CD4-positive, alpha-beta T cell (primary cell): ENCODE measurements at regions of chr6 and their contacts with region 1.

Region 1: GRCh38 chr6:57316581-57317059 is 810 bp upstream of the PRIM2 start:
- DNase-seq: peak; percentile 64 to 90 (median 76)
- ATAC-seq: peak; percentile 83
- H3K4me3 ChIP-seq: peak overlapping the region; percentile 75
- H3K4me3 Mint-ChIP-seq: peak overlapping the region; percentile 97
- H3K27ac ChIP-seq: peak overlapping the region; percentile 20 to 37
- H3K27ac Mint-ChIP-seq: peak overlapping the region; percentile 84
- H3K4me1 ChIP-seq: peaks cover 12% of the 10 kb centered on the region
- H3K4me1 Mint-ChIP-seq: peaks cover 35% of the 10 kb centered on the region
- H3K27me3 ChIP-seq: no peaks in the 10 kb centered on the region
- H3K27me3 Mint-ChIP-seq: no peaks in the 10 kb centered on the region
- CTCF ChIP-seq: peak; percentile 93

Region 2: GRCh38 chr6:56637640-56638039 is 679.0 kb before region 1 on chr6:
- CTCF ChIA-PET with region 1: no interaction called
- POLR2A ChIA-PET with region 1: interaction called, 3 read pairs
- intact Hi-C with region 1: loop called (anchors 2 to 5 kb)
- DNase-seq: peak in 3 of 14 experiments; percentile 5 to 28 (median 20)
- ATAC-seq: no peak
- H3K4me3 ChIP-seq: no peak overlapping the region
- H3K4me3 Mint-ChIP-seq: no peak overlapping the region
- H3K27ac ChIP-seq: no peak overlapping the region
- H3K27ac Mint-ChIP-seq: no peak overlapping the region
- H3K4me1 ChIP-seq: no peaks in the 10 kb centered on the region
- H3K4me1 Mint-ChIP-seq: no peaks in the 10 kb centered on the region
- H3K27me3 ChIP-seq: no peaks in the 10 kb centered on the region
- H3K27me3 Mint-ChIP-seq: no peaks in the 10 kb centered on the region
- CTCF ChIP-seq: peak; percentile 38

Region 3: DNA sequence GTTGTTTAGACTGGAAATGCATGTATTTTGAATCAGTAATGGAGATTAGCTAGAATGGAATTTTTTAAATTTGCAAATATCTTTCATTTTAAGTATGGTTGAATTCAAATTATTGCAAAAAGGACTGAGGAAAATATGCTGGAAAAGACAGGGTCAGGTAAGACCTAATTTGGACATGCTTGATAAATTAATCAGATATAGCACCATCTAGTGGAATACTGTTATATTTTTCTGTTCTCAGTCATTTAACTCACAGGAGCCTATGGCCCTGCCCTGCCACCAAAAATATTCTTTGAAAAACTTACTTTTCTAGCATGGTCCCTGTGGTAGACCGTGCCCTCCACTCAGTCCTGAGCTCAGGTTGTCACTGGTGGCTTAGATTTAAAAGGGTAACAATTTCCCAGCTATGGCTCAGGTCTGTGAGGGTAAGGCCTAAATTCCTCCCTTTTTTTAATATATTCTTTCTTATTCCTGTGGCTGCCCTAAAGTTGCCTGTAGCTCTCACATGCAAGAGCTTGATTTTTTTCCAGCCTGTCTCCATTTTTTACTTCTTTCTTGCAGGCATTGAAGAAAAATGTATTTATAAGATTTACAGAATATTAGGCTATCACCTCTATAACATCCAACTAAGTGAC is 295.4 kb before region 1 on chr6:
- CTCF ChIA-PET with region 1: no interaction called
- POLR2A ChIA-PET with region 1: no interaction called
- intact Hi-C with region 1: loop called in 1 of 2 experiments (anchors 2 kb)
- DNase-seq: peak in 3 of 14 experiments; percentile 22 to 38 (median 26)
- ATAC-seq: peak; percentile 44
- H3K4me3 ChIP-seq: no peak overlapping the region
- H3K4me3 Mint-ChIP-seq: no peak overlapping the region
- H3K27ac ChIP-seq: no peak overlapping the region
- H3K27ac Mint-ChIP-seq: no peak overlapping the region
- H3K4me1 ChIP-seq: no peaks in the 10 kb centered on the region
- H3K4me1 Mint-ChIP-seq: no peaks in the 10 kb centered on the region
- H3K27me3 ChIP-seq: no peaks in the 10 kb centered on the region
- H3K27me3 Mint-ChIP-seq: peaks cover 5% of the 10 kb centered on the region
- CTCF ChIP-seq: peak; percentile 62

Region 4: DNA sequence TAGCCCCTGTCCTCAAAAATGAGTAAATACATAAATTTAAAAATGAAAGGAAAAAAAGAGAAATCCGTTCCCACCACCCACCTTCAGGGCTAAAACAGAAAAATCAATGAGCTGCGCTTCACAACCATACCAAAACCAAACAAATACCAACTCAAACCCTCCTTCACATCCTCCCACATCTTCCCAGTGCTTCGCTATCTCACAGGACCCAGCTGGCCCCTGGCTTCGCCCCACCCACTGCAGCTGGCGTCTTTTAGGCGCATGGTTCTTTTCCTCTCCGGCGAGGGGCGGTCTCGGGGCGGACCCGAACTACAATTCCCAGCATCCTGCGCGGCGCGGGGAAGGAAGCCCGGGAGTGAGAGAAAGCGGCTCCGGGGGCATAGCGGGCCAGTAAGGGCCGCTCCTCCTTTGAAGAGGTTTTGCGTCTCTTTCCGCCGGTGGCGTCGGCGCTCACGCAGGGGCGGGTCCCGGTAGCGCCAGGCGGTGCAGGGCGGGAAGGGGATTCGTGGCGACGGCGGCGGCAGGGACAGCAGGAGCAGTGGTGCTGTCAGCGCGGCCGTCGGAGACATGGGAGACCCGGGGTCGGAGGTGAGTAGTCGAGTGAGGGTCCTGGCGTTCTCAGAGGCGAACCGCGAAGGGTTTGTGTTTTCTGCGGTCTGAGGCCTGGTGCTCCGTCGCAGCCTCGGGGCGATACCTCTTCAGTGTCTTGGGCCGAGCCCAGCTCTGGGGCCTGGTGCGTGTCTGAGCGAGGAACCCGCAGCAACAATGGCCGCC is 226.7 kb before region 1 on chr6 and contains the start of gene ZNF451:
- CTCF ChIA-PET with region 1: no interaction called
- POLR2A ChIA-PET with region 1: no interaction called
- intact Hi-C with region 1: loop called in 1 of 2 experiments (anchors 5 kb)
- DNase-seq: peak; percentile 90 to 98 (median 96)
- ATAC-seq: peak; percentile 89
- H3K4me3 ChIP-seq: peak within 1 kb of the TSS; percentile 59
- H3K4me3 Mint-ChIP-seq: peak within 1 kb of the TSS; percentile 88
- H3K27ac ChIP-seq: peak within 1 kb of the TSS; percentile 41 to 60
- H3K27ac Mint-ChIP-seq: peak within 1 kb of the TSS; percentile 85
- H3K4me1 ChIP-seq: peaks cover 14% of the 10 kb centered on the region
- H3K4me1 Mint-ChIP-seq: peaks cover 36% of the 10 kb centered on the region
- H3K27me3 ChIP-seq: no peaks in the 10 kb centered on the region
- H3K27me3 Mint-ChIP-seq: no peaks in the 10 kb centered on the region
- CTCF ChIP-seq: no peak
- total RNA-seq, gene ZNF451: 124 to 132 TPM

Region 5: GRCh38 chr6:57190140-57190539 is 126.5 kb before region 1 on chr6:
- CTCF ChIA-PET with region 1: interaction called, 4 read pairs
- POLR2A ChIA-PET with region 1: interaction called, 11 read pairs
- intact Hi-C with region 1: loop called (anchors 1 to 5 kb)
- DNase-seq: no peak
- ATAC-seq: no peak
- H3K4me3 ChIP-seq: no peak overlapping the region
- H3K4me3 Mint-ChIP-seq: no peak overlapping the region
- H3K27ac ChIP-seq: no peak overlapping the region
- H3K27ac Mint-ChIP-seq: no peak overlapping the region
- H3K4me1 ChIP-seq: no peaks in the 10 kb centered on the region
- H3K4me1 Mint-ChIP-seq: peaks cover 5% of the 10 kb centered on the region
- H3K27me3 ChIP-seq: no peaks in the 10 kb centered on the region
- H3K27me3 Mint-ChIP-seq: no peaks in the 10 kb centered on the region
- CTCF ChIP-seq: peak; percentile 3

Region 6: GRCh38 chr6:57267586-57268293 is 48.9 kb before region 1 on chr6:
- CTCF ChIA-PET with region 1: interaction called, 7 read pairs
- POLR2A ChIA-PET with region 1: no interaction called
- intact Hi-C with region 1: loop called (anchors 1 to 2 kb)
- DNase-seq: peak in 13 of 14 experiments; percentile 4 to 61 (median 23)
- ATAC-seq: no peak
- H3K4me3 ChIP-seq: no peak overlapping the region
- H3K4me3 Mint-ChIP-seq: no peak overlapping the region
- H3K27ac ChIP-seq: no peak overlapping the region
- H3K27ac Mint-ChIP-seq: no peak overlapping the region
- H3K4me1 ChIP-seq: no peaks in the 10 kb centered on the region
- H3K4me1 Mint-ChIP-seq: no peaks in the 10 kb centered on the region
- H3K27me3 ChIP-seq: peaks cover 0 to 4% of the 10 kb centered on the region in 2 experiments
- H3K27me3 Mint-ChIP-seq: peaks cover 5% of the 10 kb centered on the region
- CTCF ChIP-seq: peak; percentile 57